ENCODE measurements at regions of chr16 and their contacts with region 1.

Region 1: DNA sequence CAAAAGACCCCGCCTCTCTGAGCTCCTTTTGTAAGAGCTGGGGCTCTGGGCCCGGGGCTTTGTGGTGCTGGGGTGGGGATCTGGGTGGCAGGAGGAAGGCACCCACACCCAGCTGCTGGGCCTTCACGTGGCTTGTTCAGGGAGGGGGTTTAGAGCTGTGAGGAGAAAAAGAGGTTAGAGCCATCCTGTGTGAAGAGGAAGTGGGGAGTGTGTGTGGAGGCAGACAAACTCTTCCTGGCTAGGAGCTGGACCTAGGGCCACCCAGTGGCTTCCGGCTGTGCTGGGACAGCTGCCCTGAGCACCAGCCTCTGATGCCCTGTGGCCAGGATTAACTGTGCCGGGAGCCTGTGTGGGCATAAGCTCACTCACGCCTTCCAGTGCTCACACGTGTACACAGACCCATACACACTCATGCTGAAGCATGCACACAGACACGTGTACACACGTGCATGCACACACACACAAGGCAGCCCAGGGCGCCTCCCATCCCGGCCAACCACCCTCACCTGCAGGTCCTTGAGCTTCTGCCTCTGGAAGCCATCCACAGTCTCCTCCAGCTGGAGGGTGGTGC is 7.4 kb downstream of the CIBAR2 start:
- DNase-seq: peak; percentile 12 to 65 (median 40)
- H3K4me3 ChIP-seq: peak overlapping the region; percentile 37
- H3K4me3 Mint-ChIP-seq: peak overlapping the region in 6 of 7 donors; percentile 37 to 90 (median 78)
- H3K27ac ChIP-seq: no peak overlapping the region
- H3K27ac Mint-ChIP-seq: peak overlapping the region; percentile 81 to 95 (median 90)
- H3K4me1 ChIP-seq: peaks cover 43% of the 10 kb centered on the region
- H3K4me1 Mint-ChIP-seq: peaks cover 45 to 56% (median 49%) of the 10 kb centered on the region in 3 donors
- H3K27me3 ChIP-seq: no peaks in the 10 kb centered on the region
- H3K27me3 Mint-ChIP-seq: no peaks in the 10 kb centered on the region

Region 2: GRCh38 chr16:85061566-85061965 is 43.3 kb before region 1 on chr16:
- CTCF ChIA-PET with region 1: no interaction called
- POLR2A ChIA-PET with region 1: no interaction called
- DNase-seq: no peak
- H3K4me3 ChIP-seq: no peak overlapping the region
- H3K4me3 Mint-ChIP-seq: no peak overlapping the region
- H3K27ac ChIP-seq: no peak overlapping the region
- H3K27ac Mint-ChIP-seq: peak overlapping the region in 3 of 8 donors; percentile 34 to 55 (median 53)
- H3K4me1 ChIP-seq: peaks cover 20% of the 10 kb centered on the region
- H3K4me1 Mint-ChIP-seq: peaks cover 17 to 33% (median 21%) of the 10 kb centered on the region in 3 donors
- H3K27me3 ChIP-seq: no peaks in the 10 kb centered on the region
- H3K27me3 Mint-ChIP-seq: peaks cover 0 to 3% of the 10 kb centered on the region in 2 donors

Region 3: DNA sequence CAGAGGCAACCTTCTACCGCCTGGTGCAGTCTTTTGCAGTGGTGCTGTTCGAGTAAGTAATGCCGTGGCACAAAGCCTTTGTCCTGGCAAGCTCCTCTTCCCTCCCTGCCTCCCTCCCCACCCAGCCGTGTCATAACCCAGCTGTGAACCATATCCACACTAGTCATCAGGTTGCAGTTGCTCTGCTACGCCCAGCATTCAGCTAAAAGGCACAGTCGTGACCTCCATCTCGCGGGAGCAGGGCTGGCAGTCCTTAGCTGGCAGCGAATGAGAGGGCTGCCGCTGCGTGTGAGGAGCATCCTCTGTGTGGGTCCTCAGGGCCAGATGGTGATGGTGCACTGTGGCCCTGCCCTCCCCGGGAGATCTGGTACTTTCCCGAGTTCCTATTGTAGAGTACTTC is 32.0 kb before region 1 on chr16:
- CTCF ChIA-PET with region 1: no interaction called
- POLR2A ChIA-PET with region 1: no interaction called
- DNase-seq: no peak
- H3K4me3 ChIP-seq: no peak overlapping the region
- H3K4me3 Mint-ChIP-seq: no peak overlapping the region
- H3K27ac ChIP-seq: no peak overlapping the region
- H3K27ac Mint-ChIP-seq: no peak overlapping the region
- H3K4me1 ChIP-seq: no peaks in the 10 kb centered on the region
- H3K4me1 Mint-ChIP-seq: no peaks in the 10 kb centered on the region
- H3K27me3 ChIP-seq: no peaks in the 10 kb centered on the region
- H3K27me3 Mint-ChIP-seq: no peaks in the 10 kb centered on the region

Region 4: GRCh38 chr16:85114909-85115567 is 10.1 kb after region 1 on chr16:
- CTCF ChIA-PET with region 1: interaction called, 11 read pairs
- POLR2A ChIA-PET with region 1: interaction called, 3 read pairs
- DNase-seq: peak; percentile 59 to 78 (median 68)
- H3K4me3 ChIP-seq: peak overlapping the region; percentile 17
- H3K4me3 Mint-ChIP-seq: peak overlapping the region in 6 of 7 donors; percentile 73 to 82 (median 77)
- H3K27ac ChIP-seq: no peak overlapping the region
- H3K27ac Mint-ChIP-seq: peak overlapping the region in 6 of 8 donors; percentile 6 to 91 (median 74)
- H3K4me1 ChIP-seq: peaks cover 8% of the 10 kb centered on the region
- H3K4me1 Mint-ChIP-seq: peaks cover 8 to 13% (median 13%) of the 10 kb centered on the region in 3 donors
- H3K27me3 ChIP-seq: no peaks in the 10 kb centered on the region
- H3K27me3 Mint-ChIP-seq: peaks cover 0 to 2% of the 10 kb centered on the region in 2 donors

Measured in CD8-positive, alpha-beta memory T cell (primary cell).